GM12878 (cell line): ENCODE measurements at regions of chr5 and their contacts with region 1.

Region 1: DNA sequence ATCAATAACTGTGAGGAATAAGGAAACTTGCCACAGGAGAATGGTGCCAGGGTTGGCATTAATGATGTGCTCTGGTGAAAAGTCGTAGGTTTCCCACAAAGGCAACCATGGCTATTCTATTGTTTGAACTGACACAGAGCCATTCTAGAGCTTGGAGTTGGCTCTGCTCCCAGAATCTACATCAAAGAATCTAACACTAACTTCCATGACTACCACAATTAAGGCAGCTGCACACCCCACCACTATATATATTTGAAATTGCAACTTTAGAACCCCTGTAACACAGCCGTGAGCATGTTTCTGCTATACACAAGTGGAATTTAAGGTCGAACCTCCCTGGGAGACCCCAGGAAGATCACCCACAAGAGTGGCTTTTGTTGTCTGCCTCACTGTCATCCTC is 89.7 kb upstream of the CCDC152 start:
- DNase-seq: no peak
- ATAC-seq: no peak
- H3K4me3 ChIP-seq: no peak overlapping the region
- H3K27ac ChIP-seq: no peak overlapping the region
- H3K4me1 ChIP-seq: no peaks in the 10 kb centered on the region
- H3K27me3 ChIP-seq: no peaks in the 10 kb centered on the region
- CTCF ChIP-seq: no peak
- EP300 ChIP-seq: no peak
- POLR2A ChIP-seq: no peak
- RAD21 ChIP-seq: no peak

Region 2: GRCh38 chr5:42656651-42657015 is 10.2 kb before region 1 on chr5:
- CTCF ChIA-PET with region 1: interaction called, 13 read pairs
- POLR2A ChIA-PET with region 1: interaction called, 3 read pairs
- RAD21 ChIA-PET with region 1: interaction called, 6 read pairs
- SMC1A ChIA-PET with region 1: interaction called, 10 read pairs
- in situ Hi-C with region 1: no loop called
- intact Hi-C with region 1: no loop called
- DNase-seq: no peak
- ATAC-seq: no peak
- H3K4me3 ChIP-seq: no peak overlapping the region
- H3K27ac ChIP-seq: no peak overlapping the region
- H3K4me1 ChIP-seq: no peaks in the 10 kb centered on the region
- H3K27me3 ChIP-seq: no peaks in the 10 kb centered on the region
- CTCF ChIP-seq: no peak
- EP300 ChIP-seq: no peak
- POLR2A ChIP-seq: no peak
- RAD21 ChIP-seq: no peak

Region 3: DNA sequence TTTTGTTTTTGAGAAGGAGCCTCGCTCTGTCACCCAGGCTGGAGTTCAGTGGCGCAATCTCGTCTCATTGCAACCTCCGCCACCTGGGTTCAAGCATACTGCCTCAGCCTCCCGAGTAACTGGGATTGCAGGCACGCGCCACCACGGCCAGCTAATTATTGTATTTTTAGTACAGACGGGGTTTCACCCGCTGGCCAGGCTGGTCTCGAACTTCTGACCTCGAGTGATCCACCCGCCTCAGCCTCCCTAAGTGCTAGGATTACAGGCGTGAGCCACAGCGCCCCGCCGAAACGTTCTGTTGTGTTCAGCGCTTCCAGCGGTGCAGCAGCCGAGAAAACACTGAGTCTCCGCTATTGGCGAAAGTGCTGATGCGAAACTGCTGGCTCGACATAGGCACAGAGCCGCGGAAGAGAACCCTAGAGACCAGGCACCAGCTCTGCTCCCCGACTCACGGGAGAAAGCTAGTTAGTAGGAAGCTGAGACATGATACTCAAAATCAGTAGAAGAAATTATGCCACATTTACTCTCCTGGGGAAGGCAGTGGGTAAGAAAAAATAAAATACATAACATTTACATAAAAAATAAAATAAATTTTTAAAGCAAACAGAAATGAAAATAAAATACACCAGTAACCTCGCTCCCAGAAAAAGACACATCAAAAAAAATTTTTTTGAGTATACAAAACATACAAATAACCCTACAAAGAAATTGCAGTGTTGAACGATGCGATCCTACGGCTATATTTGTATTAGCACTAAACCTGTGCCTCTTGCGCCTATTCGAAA is 341.7 kb after region 1 on chr5:
- CTCF ChIA-PET with region 1: no interaction called
- POLR2A ChIA-PET with region 1: no interaction called
- RAD21 ChIA-PET with region 1: no interaction called
- SMC1A ChIA-PET with region 1: no interaction called
- in situ Hi-C with region 1: no loop called
- intact Hi-C with region 1: no loop called
- DNase-seq: no peak
- ATAC-seq: peak; percentile 72
- H3K4me3 ChIP-seq: peak overlapping the region; percentile 67
- H3K27ac ChIP-seq: peak overlapping the region; percentile 94
- H3K4me1 ChIP-seq: peaks cover 13% of the 10 kb centered on the region
- H3K27me3 ChIP-seq: no peaks in the 10 kb centered on the region
- CTCF ChIP-seq: peak in 2 of 3 experiments; percentile 5 to 13; a peak in 2 of 6 replicates
- EP300 ChIP-seq: peak in 1 of 2 experiments; percentile 77; a peak in 2 of 4 replicates
- POLR2A ChIP-seq: no peak
- RAD21 ChIP-seq: no peak